ENCODE measurements at regions of chr1 and their contacts with region 1.

Region 1: GRCh38 chr1:2586154-2587070 is at the start of gene PRXL2B:
- DNase-seq: peak; percentile 83
- ATAC-seq: peak; percentile 91
- H3K4me3 ChIP-seq: peak within 1 kb of the TSS; percentile 81
- H3K27ac ChIP-seq: peak within 1 kb of the TSS; percentile 97
- H3K4me1 ChIP-seq: peaks cover 24% of the 10 kb centered on the region
- H3K27me3 ChIP-seq: no peaks in the 10 kb centered on the region
- CTCF ChIP-seq: no peak
- EP300 ChIP-seq: no peak
- POLR2A ChIP-seq: peak; percentile 82
- RAD21 ChIP-seq: no peak
- polyA plus RNA-seq, gene PRXL2B: 0.44 to 0.53 TPM

Region 2: GRCh38 chr1:2412519-2413233 is 173.7 kb before region 1 on chr1 and contains the start of gene PEX10:
- CTCF ChIA-PET with region 1: interaction called, 6 read pairs
- POLR2A ChIA-PET with region 1: interaction called, 9 read pairs
- RAD21 ChIA-PET with region 1: interaction called, 13 read pairs
- SMC1A ChIA-PET with region 1: interaction called, 6 read pairs
- in situ Hi-C with region 1: no loop called
- intact Hi-C with region 1: no loop called
- DNase-seq: peak; percentile 80
- ATAC-seq: peak; percentile 88
- H3K4me3 ChIP-seq: peak within 1 kb of the TSS; percentile 98
- H3K27ac ChIP-seq: peak within 1 kb of the TSS; percentile 62
- H3K4me1 ChIP-seq: peaks cover 27% of the 10 kb centered on the region
- H3K27me3 ChIP-seq: no peaks in the 10 kb centered on the region
- CTCF ChIP-seq: no peak
- EP300 ChIP-seq: no peak
- POLR2A ChIP-seq: peak; percentile 87
- RAD21 ChIP-seq: no peak
- polyA plus RNA-seq, gene PEX10: 0.24 TPM in 1 of 2 experiments, not detected in the other

Region 3: DNA sequence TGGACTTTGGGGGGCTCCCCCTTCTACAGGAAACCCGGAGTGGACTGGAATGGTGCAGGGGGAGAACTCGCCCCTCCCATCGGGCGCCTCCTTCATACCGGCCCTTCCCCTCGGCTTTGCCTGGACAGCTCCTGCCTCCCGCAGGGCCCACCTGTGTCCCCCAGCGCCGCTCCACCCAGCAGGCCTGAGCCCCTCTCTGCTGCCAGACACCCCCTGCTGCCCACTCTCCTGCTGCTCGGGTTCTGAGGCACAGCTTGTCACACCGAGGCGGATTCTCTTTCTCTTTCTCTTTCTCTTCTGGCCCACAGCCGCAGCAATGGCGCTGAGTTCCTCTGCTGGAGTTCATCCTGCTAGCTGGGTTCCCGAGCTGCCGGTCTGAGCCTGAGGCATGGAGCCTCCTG is 30.1 kb before region 1 on chr1 and contains the start of gene TNFRSF14:
- CTCF ChIA-PET with region 1: interaction called, 54 read pairs
- POLR2A ChIA-PET with region 1: interaction called, 61 read pairs
- RAD21 ChIA-PET with region 1: interaction called, 41 read pairs
- SMC1A ChIA-PET with region 1: interaction called, 39 read pairs
- in situ Hi-C with region 1: no loop called
- intact Hi-C with region 1: no loop called
- DNase-seq: no peak
- ATAC-seq: peak; percentile 73
- H3K4me3 ChIP-seq: peak within 1 kb of the TSS; percentile 87
- H3K27ac ChIP-seq: peak within 1 kb of the TSS; percentile 99
- H3K4me1 ChIP-seq: peaks cover 25% of the 10 kb centered on the region
- H3K27me3 ChIP-seq: no peaks in the 10 kb centered on the region
- CTCF ChIP-seq: peak in 2 of 3 experiments; percentile 12 to 13; a peak in 2 of 6 replicates
- EP300 ChIP-seq: no peak; a peak in 1 of 4 replicates
- POLR2A ChIP-seq: peak; percentile 77
- RAD21 ChIP-seq: no peak
- polyA plus RNA-seq, gene TNFRSF14: 0.43 to 2.9 TPM

Region 4: GRCh38 chr1:2561898-2562545 is 24.4 kb before region 1 on chr1:
- CTCF ChIA-PET with region 1: interaction called, 54 read pairs
- POLR2A ChIA-PET with region 1: interaction called, 61 read pairs
- RAD21 ChIA-PET with region 1: interaction called, 41 read pairs
- SMC1A ChIA-PET with region 1: interaction called, 39 read pairs
- in situ Hi-C with region 1: no loop called
- intact Hi-C with region 1: no loop called
- DNase-seq: no peak
- ATAC-seq: peak; percentile 53
- H3K4me3 ChIP-seq: no peak overlapping the region
- H3K27ac ChIP-seq: no peak overlapping the region
- H3K4me1 ChIP-seq: peaks cover 4% of the 10 kb centered on the region; the same call in 1 of the 2 replicates
- H3K27me3 ChIP-seq: no peaks in the 10 kb centered on the region
- CTCF ChIP-seq: peak; percentile 41 to 70 (median 47)
- EP300 ChIP-seq: no peak
- POLR2A ChIP-seq: 0 out of 2 replicates have a peak, but pooled peaks have one; percentile 39
- RAD21 ChIP-seq: peak; percentile 25; the same call in 1 of the 2 replicates

Region 5: DNA sequence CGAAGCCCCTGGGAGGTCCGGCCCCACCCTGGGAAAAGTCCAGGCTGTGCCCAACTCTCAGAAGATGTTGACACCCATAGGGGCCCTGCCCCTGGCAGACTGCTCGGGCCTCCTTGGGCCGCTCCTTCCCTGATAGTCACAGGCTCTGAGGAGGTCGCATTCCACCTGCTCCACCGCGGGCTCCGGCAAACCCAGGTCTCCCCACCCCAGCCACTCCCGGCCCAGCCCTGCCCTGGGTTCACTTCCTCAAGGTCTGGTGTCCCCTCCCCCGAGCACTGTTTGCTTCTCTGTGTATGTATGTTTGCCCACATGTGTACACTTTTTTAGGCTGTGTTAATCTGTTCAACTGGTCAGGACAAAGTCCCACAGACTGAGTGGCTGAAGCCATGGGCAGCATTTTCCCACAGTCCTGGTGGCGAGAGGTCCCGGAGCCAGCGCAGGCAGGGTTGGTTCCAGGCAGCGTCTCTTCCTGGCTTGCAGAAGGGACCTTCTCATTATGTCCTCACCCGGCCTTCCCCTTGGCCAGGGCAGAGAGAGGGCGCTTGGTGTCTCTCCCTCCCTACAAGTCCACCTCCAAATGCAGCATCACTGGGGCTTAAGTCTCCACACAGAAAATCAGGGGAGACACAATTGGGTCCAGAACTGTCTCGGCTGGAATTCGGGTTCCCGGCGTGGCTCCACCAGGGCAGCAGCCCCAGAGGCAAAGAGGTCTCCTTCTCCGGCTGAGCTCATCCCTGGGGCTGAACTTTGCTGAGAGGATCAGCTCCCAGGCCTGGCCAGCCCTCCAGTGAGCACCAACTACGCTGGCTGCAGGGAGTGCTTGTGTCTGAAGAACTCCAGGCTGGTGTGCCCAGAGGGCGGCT is 10.4 kb before region 1 on chr1:
- CTCF ChIA-PET with region 1: interaction called, 12 read pairs
- POLR2A ChIA-PET with region 1: interaction called, 32 read pairs
- RAD21 ChIA-PET with region 1: interaction called, 31 read pairs
- SMC1A ChIA-PET with region 1: interaction called, 13 read pairs
- in situ Hi-C with region 1: no loop called
- intact Hi-C with region 1: no loop called
- DNase-seq: no peak
- ATAC-seq: no peak; the same call in 2 of the 3 replicates
- H3K4me3 ChIP-seq: peak overlapping the region; percentile 59; the same call in 1 of the 2 replicates
- H3K27ac ChIP-seq: peak overlapping the region; percentile 99
- H3K4me1 ChIP-seq: peaks cover 46% of the 10 kb centered on the region
- H3K27me3 ChIP-seq: no peaks in the 10 kb centered on the region
- CTCF ChIP-seq: no peak
- EP300 ChIP-seq: no peak
- POLR2A ChIP-seq: no peak; the same call in 1 of the 2 replicates
- RAD21 ChIP-seq: no peak

Region 6: DNA sequence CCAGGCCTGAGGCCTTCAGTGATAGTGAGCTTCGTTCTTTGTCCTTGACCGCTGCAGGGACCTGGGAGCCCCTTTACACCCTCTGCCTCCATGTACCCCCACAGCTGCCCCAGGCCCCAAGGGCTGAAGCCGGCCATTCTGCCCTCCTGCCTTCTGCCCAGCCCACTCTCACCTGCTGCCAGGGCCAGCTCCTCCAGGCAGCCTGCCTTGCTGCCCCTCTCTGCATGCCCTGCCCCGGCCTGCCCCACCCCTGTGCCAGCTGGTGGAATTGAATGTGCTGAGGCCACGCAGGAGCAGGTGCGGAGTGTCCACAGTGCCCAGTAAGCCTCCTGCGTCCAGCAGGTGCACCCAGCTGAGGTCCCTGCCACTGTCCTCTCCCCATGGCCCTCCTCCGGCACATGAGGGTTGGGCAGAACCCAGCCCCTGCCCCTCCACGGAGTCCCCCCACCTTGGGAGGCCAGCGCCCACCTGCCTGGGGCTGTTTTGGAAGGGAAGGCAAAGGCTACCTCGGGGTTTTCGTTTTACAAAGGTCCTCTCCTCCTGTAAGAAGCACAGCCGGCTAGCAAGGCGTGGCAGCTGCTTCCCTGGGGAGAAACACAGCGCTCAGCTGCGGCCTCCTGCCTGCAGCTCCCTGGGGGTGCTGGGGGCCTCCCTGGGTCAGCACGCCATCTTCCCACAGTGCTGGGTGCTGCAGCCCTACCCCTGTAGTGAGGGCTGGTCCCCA is 25.4 kb after region 1 on chr1:
- CTCF ChIA-PET with region 1: no interaction called
- POLR2A ChIA-PET with region 1: no interaction called
- RAD21 ChIA-PET with region 1: no interaction called
- SMC1A ChIA-PET with region 1: no interaction called
- in situ Hi-C with region 1: no loop called
- intact Hi-C with region 1: no loop called
- DNase-seq: no peak
- ATAC-seq: no peak
- H3K4me3 ChIP-seq: no peak overlapping the region
- H3K27ac ChIP-seq: no peak overlapping the region
- H3K4me1 ChIP-seq: no peaks in the 10 kb centered on the region
- H3K27me3 ChIP-seq: no peaks in the 10 kb centered on the region
- CTCF ChIP-seq: no peak
- EP300 ChIP-seq: no peak
- POLR2A ChIP-seq: no peak
- RAD21 ChIP-seq: no peak

Region 7: DNA sequence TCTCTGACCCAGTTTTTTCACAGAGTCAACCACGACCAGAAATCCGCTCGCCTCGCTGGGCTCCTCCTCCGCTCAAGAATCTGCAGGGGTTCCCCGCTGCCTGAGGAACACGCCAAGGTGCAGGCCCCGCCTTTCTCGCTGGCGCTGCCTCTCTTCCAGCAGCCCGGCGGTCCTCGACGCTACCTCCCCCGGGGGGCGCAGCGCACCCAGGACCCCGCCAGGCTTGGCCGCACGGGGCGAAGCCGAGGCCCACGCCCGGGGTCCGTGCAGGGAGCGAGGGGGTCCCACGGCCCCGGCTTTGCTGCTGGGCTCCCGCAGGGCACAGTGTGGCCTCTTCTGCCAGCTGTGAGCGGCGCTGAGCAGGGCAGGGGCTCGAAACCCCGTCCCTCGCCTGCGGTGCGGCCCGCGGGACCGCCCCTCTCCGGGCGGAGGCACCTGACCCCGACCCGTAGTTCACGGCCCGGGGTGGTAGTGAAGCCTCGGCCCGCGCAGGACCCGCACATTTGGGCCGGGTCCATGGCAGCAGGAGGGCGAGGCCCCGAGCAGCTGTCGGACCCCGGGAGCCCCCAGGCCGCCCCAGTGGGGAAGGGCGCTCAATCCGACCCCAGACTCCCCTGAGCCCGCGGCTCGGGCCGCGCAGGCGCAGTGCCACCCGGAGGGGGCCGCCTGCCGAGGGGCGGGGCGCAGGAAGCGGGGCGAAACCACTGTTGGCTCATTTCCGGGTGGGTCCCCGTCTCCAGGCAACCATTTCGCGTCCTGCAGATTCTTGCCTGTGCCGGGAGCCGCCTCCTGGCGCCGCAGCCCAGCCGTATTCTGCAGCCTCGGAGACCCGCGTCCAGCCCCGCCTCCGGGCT is 56.4 kb after region 1 on chr1:
- CTCF ChIA-PET with region 1: no interaction called
- POLR2A ChIA-PET with region 1: no interaction called
- RAD21 ChIA-PET with region 1: no interaction called
- SMC1A ChIA-PET with region 1: interaction called, 3 read pairs
- in situ Hi-C with region 1: no loop called
- intact Hi-C with region 1: loop called (anchors 2 kb)
- DNase-seq: peak; percentile 42
- ATAC-seq: peak; percentile 95
- H3K4me3 ChIP-seq: peak overlapping the region; percentile 90
- H3K27ac ChIP-seq: peak overlapping the region; percentile 91
- H3K4me1 ChIP-seq: peaks cover 6% of the 10 kb centered on the region
- H3K27me3 ChIP-seq: no peaks in the 10 kb centered on the region; a peak in 1 of 4 replicates
- CTCF ChIP-seq: peak in 2 of 3 experiments; percentile 17 to 27; a peak in 3 of 6 replicates
- EP300 ChIP-seq: no peak
- POLR2A ChIP-seq: peak; percentile 82
- RAD21 ChIP-seq: peak; percentile 7; the same call in 1 of the 2 replicates